Prostate gland (tissue), 2 donors: ENCODE measurements at regions of chr11 and their contacts with region 1.

Region 1: DNA sequence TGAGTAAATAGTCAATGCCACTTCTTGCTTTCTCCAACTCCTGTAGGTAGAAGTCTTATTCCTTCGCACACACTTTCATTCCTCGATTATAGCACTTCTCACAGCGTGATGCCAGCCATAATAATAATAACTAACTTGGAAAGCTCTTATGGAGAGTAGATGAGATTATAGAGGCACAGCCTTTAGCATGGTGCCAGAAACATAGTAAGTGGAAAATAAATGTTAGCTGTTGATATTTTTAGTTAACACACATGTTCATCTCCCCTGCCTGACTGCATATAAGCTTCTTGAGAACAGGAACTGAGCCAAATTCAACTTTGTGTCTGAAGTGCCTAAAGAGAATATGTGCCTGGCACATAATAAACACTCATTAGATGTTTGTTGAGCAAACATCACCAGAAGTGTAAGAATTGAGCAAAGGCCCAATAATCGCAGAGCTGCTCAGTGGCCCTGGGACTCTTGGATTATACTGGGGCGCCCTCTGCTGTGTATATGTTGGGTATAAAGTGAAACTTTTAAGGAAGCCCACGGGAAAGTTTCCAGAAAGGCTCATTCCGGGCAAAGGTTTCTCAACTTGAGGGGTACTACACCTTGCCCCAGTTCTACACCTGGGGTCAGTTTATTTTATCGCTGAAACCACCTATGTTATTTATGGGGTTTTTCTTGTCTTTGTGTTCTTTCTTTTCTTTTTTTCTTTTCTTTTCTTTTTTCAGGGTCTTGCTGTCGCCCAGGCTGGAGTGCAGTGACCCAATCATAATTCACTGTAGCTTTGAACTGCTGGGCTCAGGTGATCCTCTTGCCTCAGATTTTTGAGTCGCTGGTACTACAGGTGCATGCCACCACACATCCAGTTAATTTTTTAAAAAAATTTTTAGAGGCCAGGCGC is 22.3 kb downstream of the SLN start:
- DNase-seq: peak; percentile 60
- H3K4me3 ChIP-seq: no peak overlapping the region
- H3K27ac ChIP-seq: no peak overlapping the region
- H3K4me1 ChIP-seq: no peaks in the 10 kb centered on the region
- H3K27me3 ChIP-seq: no peaks in the 10 kb centered on the region
- CTCF ChIP-seq: peak; percentile 26 to 57 (median 53)
- POLR2A ChIP-seq: no peak

Region 2: DNA sequence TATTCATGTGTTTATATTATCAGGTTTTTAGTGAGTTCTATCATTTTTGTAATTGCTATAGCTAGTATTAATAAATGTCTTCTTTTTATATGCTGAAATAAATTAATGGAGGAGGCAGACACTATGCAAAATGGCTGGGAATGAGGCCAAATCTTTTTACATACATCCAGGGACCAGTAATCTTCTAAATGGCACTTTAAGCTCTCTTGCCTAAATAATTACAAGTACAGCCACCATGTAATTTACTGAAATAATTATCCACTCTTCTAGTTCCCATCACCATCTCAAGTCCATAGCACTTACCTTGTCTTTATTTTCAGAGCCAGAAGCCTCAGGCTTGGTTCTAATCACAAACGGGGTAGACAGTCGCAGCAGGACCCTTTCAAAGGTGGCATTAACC is 750.4 kb before region 1 on chr11:
- intact Hi-C with region 1: no loop called
- DNase-seq: no peak
- H3K4me3 ChIP-seq: no peak overlapping the region
- H3K27ac ChIP-seq: no peak overlapping the region
- H3K4me1 ChIP-seq: no peaks in the 10 kb centered on the region
- H3K27me3 ChIP-seq: no peaks in the 10 kb centered on the region
- CTCF ChIP-seq: no peak
- POLR2A ChIP-seq: no peak

Region 3: GRCh38 chr11:107563702-107564101 is 125.9 kb before region 1 on chr11:
- intact Hi-C with region 1: loop called (anchors 5 kb)
- DNase-seq: no peak
- H3K4me3 ChIP-seq: no peak overlapping the region
- H3K27ac ChIP-seq: no peak overlapping the region
- H3K4me1 ChIP-seq: no peaks in the 10 kb centered on the region
- H3K27me3 ChIP-seq: no peaks in the 10 kb centered on the region
- CTCF ChIP-seq: peak in 3 of 4 experiments; percentile 38 to 53 (median 50)
- POLR2A ChIP-seq: no peak

Region 4: GRCh38 chr11:107577346-107577711 is 112.2 kb before region 1 on chr11:
- intact Hi-C with region 1: loop called (anchors 5 kb)
- DNase-seq: no peak
- H3K4me3 ChIP-seq: no peak overlapping the region
- H3K27ac ChIP-seq: no peak overlapping the region
- H3K4me1 ChIP-seq: no peaks in the 10 kb centered on the region
- H3K27me3 ChIP-seq: no peaks in the 10 kb centered on the region
- CTCF ChIP-seq: no peak
- POLR2A ChIP-seq: no peak

Region 5: DNA sequence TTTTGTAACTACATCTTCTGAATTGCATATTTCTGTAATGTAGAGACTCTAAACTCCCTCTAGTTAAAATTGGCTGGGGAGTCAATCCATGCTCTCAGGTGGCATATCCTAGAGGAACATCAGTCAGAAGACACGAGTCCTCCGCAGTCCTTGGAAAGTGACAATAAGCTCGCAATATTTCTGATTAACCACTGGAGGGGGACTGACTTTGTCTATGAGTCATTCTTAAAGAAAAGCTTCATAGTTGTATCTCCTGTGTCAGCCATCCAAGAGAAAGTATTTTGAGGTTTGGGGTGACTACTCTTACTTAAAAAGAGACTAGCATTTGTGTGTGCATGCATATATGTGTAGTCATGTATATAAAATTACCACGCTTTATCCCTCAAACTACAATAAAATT is 37.9 kb before region 1 on chr11:
- intact Hi-C with region 1: no loop called
- DNase-seq: no peak
- H3K4me3 ChIP-seq: no peak overlapping the region
- H3K27ac ChIP-seq: no peak overlapping the region
- H3K4me1 ChIP-seq: no peaks in the 10 kb centered on the region
- H3K27me3 ChIP-seq: no peaks in the 10 kb centered on the region
- CTCF ChIP-seq: no peak
- POLR2A ChIP-seq: no peak